Caco-2 (cell line): ENCODE measurements at regions of chr13 and their contacts with region 1.

Region 1: DNA sequence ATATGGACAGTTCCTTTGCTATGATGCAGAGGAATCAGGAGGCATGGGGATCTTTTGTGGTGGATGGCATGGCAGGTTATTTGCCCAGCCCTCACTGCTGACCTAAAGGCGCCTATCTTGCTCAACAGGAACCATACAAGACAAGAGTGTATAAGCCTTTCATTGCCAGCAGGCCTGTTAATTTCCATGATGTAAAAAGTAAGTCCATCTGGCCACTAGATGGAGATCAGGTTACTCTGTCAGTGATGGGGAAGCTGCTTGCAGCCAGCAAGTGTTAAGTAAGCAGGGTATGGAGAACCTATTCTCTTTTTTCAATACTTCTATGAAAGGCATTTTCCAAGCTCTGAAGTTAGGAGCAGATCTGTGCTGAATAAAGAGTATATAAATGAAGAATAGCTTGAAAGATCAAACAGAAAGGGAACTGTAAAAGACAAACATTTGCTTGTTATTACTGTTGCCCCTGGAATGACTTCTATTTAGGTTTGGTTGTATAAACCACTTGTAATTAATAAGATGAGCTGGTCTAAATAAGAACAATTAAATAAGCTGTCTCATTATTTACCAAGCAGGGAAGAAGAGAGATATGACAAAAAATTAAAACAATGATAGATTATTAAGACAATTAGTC is 210.9 kb downstream of the RGCC start:
- DNase-seq: peak; percentile 80 to 84
- H3K4me3 ChIP-seq: no peak overlapping the region
- H3K4me3 Mint-ChIP-seq: no peak overlapping the region
- H3K27ac Mint-ChIP-seq: peak overlapping the region; percentile 24
- H3K4me1 ChIP-seq: peaks cover 28% of the 10 kb centered on the region
- H3K4me1 Mint-ChIP-seq: peaks cover 6% of the 10 kb centered on the region
- H3K27me3 ChIP-seq: no peaks in the 10 kb centered on the region
- H3K27me3 Mint-ChIP-seq: no peaks in the 10 kb centered on the region
- CTCF ChIP-seq: peak; percentile 83 to 87

Region 2: DNA sequence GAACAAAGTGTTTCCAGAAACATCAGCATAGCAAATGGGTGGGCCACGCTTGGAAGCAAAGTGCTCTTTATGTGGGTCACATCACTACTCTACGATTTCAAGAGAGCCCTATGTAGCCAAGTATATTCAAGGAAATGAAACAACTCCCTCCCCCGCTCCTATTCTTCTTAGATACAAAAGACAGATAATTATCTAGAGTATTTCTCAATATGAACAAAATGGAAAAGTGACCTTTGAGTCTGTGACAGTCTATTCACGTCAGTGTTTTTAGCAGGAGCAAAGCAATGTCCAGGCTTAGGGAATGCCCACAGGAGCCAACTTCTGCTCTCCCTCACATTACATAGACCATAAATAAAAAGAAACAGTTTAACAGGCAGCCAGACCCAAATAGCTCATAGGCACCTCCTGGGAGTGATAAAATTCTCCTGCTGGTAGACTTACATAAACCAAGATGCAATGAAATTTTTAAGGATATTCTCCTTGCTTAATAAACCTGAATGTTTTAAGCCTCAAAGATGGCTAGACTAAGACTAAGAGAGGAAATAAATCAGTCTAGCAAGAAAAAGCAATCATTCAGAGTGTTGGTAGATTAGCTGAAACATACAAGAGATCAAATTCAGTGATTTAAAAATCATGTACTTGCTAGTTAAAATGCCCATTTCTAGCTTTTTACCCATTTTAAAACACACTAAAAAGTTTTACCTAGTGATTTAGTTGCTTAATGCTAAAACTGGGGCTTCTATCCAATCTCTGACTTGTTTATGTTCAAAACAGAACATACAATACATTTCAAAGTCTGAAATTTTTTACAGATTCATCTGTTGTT is 28.1 kb before region 1 on chr13:
- CTCF ChIA-PET with region 1: no interaction called
- POLR2A ChIA-PET with region 1: no interaction called
- intact Hi-C with region 1: no loop called
- DNase-seq: peak in 1 of 2 experiments; percentile 50
- H3K4me3 ChIP-seq: no peak overlapping the region
- H3K4me3 Mint-ChIP-seq: no peak overlapping the region
- H3K27ac Mint-ChIP-seq: peak overlapping the region; percentile 87
- H3K4me1 ChIP-seq: peaks cover 44% of the 10 kb centered on the region
- H3K4me1 Mint-ChIP-seq: peaks cover 64% of the 10 kb centered on the region
- H3K27me3 ChIP-seq: no peaks in the 10 kb centered on the region
- H3K27me3 Mint-ChIP-seq: no peaks in the 10 kb centered on the region
- CTCF ChIP-seq: no peak

Region 3: DNA sequence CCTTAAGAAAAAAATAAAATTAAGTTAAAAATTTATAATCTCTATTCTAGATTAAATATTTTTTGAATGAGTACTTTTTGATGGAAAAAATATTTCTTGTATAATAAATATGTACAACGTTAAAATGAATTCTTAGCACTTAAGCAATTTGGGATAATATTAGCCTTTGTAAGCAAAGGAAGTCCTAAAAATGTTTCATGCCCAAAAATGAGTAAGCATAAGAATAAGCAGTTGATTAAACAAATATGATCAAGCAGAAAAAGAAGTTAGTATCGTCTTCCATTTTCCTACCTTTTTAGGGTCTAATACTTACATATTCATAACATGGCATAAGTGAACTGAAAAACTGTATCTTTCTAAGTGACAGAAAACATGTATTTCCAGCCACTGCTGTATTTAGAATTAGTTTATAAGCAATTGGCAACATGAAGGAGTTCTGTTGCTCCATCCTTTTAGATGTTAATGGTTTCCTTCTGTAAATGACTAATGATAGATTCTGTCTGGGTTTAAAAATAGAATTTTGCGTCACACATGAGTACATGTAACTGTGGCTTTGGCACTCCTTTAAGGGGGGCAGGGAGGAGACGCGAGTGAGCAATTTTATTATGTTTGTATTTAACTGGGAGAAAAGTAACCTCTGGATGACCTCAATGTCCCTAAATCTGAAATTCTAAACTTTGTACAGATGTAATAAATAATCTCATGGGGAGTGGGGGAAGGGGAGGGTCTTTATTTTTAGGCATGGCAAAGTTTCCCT is 26.5 kb after region 1 on chr13:
- CTCF ChIA-PET with region 1: interaction called, 3 read pairs
- POLR2A ChIA-PET with region 1: no interaction called
- intact Hi-C with region 1: loop called (anchors 1 kb)
- DNase-seq: peak in 1 of 2 experiments; percentile 42
- H3K4me3 ChIP-seq: no peak overlapping the region
- H3K4me3 Mint-ChIP-seq: peak overlapping the region; percentile 54
- H3K27ac Mint-ChIP-seq: peak overlapping the region; percentile 94
- H3K4me1 ChIP-seq: peaks cover 57% of the 10 kb centered on the region
- H3K4me1 Mint-ChIP-seq: peaks cover 40% of the 10 kb centered on the region
- H3K27me3 ChIP-seq: no peaks in the 10 kb centered on the region
- H3K27me3 Mint-ChIP-seq: no peaks in the 10 kb centered on the region
- CTCF ChIP-seq: no peak

Region 4: DNA sequence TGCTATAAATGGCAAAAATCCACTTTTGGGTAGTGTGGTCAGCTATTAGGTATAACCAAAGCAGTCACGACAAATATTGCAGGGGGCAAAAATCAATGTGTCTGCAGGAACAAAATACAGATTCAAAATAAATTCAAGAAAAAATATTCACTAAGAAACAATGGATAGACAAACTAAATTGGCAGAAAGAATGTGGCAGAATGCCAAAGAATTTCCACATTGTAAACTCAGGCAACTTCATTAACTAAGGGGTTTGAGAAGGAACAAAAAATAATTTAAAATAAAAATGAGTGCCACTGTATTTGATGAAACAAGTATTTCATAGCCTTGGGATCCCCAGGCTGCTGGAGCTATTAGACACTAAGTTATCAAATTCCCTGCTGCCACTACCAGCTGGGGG is 99.6 kb after region 1 on chr13:
- CTCF ChIA-PET with region 1: no interaction called
- POLR2A ChIA-PET with region 1: no interaction called
- intact Hi-C with region 1: no loop called
- DNase-seq: no peak
- H3K4me3 ChIP-seq: no peak overlapping the region
- H3K4me3 Mint-ChIP-seq: no peak overlapping the region
- H3K27ac Mint-ChIP-seq: no peak overlapping the region
- H3K4me1 ChIP-seq: no peaks in the 10 kb centered on the region
- H3K4me1 Mint-ChIP-seq: no peaks in the 10 kb centered on the region
- H3K27me3 ChIP-seq: no peaks in the 10 kb centered on the region
- H3K27me3 Mint-ChIP-seq: no peaks in the 10 kb centered on the region
- CTCF ChIP-seq: no peak

Region 5: DNA sequence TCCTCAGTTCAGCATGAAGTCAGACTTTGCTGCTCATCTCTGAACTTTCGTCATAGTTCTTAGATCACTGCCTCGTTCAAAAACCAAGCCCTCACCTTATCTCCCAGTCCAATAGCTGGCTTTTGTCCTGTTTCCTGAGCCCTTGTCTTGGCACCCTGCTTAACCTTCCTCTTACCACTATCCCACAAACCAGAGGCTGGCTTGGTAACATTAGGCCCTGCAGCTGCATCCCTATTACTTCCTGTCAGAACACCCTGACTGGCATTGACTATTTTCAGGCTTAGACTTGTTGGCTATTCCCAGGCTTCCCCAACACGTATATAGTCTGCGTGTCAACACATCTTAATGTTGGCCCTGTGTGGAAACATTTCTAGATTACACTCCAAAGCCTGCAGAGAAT is 120.3 kb after region 1 on chr13:
- CTCF ChIA-PET with region 1: no interaction called
- POLR2A ChIA-PET with region 1: no interaction called
- intact Hi-C with region 1: no loop called
- DNase-seq: no peak
- H3K4me3 ChIP-seq: no peak overlapping the region
- H3K4me3 Mint-ChIP-seq: no peak overlapping the region
- H3K27ac Mint-ChIP-seq: no peak overlapping the region
- H3K4me1 ChIP-seq: no peaks in the 10 kb centered on the region
- H3K4me1 Mint-ChIP-seq: no peaks in the 10 kb centered on the region
- H3K27me3 ChIP-seq: no peaks in the 10 kb centered on the region
- H3K27me3 Mint-ChIP-seq: no peaks in the 10 kb centered on the region
- CTCF ChIP-seq: no peak

Region 6: DNA sequence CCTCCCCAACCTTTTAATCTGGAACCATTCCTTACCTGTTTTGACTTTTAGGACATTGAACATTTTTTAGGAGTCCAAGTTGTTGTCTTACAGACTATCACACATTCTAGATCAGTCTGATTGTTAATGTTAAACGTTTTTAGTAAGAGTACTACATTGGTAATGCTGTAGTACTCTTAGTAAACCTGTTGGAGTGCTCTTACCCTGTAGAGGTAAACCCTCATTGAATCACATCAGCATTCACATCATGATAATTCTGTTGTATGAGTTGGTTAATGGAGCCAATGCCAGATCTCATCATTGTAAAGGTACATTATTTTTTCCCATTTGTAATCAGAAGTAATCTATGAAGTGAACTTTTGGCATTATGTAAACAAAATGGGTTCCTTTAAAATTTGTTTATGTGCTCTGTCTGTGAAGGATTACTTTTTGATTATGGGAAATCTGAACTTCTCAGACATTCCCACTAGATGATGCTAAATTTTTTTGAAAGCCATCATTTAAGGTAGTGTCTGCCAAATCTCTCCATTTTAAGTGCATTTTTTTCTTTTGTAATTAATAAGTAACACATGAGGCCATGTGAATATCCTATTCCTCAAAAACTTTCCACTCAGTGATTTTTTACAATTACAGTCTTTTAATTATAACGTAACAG is 237.5 kb after region 1 on chr13:
- CTCF ChIA-PET with region 1: no interaction called
- POLR2A ChIA-PET with region 1: no interaction called
- intact Hi-C with region 1: loop called (anchors 5 kb)
- DNase-seq: peak in 1 of 2 experiments; percentile 31
- H3K4me3 ChIP-seq: no peak overlapping the region
- H3K4me3 Mint-ChIP-seq: no peak overlapping the region
- H3K27ac Mint-ChIP-seq: no peak overlapping the region
- H3K4me1 ChIP-seq: no peaks in the 10 kb centered on the region
- H3K4me1 Mint-ChIP-seq: no peaks in the 10 kb centered on the region
- H3K27me3 ChIP-seq: no peaks in the 10 kb centered on the region
- H3K27me3 Mint-ChIP-seq: no peaks in the 10 kb centered on the region
- CTCF ChIP-seq: peak; percentile 65 to 79

Region 7: GRCh38 chr13:42039946-42040729 is 371.9 kb after region 1 on chr13:
- CTCF ChIA-PET with region 1: interaction called, 3 read pairs
- POLR2A ChIA-PET with region 1: no interaction called
- intact Hi-C with region 1: loop called (anchors 1 kb)
- DNase-seq: peak; percentile 88 to 90
- H3K4me3 ChIP-seq: peak overlapping the region; percentile 58
- H3K4me3 Mint-ChIP-seq: peak overlapping the region; percentile 88
- H3K27ac Mint-ChIP-seq: peak overlapping the region; percentile 32
- H3K4me1 ChIP-seq: peaks cover 10% of the 10 kb centered on the region; the same call in 1 of the 2 replicates
- H3K4me1 Mint-ChIP-seq: peaks cover 17% of the 10 kb centered on the region
- H3K27me3 ChIP-seq: no peaks in the 10 kb centered on the region; the same call in 1 of the 2 replicates
- H3K27me3 Mint-ChIP-seq: peaks cover 37% of the 10 kb centered on the region
- CTCF ChIP-seq: peak in 1 of 2 experiments; percentile 9

Region 8: GRCh38 chr13:42215578-42216421 is 547.6 kb after region 1 on chr13:
- CTCF ChIA-PET with region 1: interaction called, 3 read pairs
- POLR2A ChIA-PET with region 1: no interaction called
- intact Hi-C with region 1: loop called (anchors 5 kb)
- DNase-seq: peak; percentile 45 to 55
- H3K4me3 ChIP-seq: no peak overlapping the region
- H3K4me3 Mint-ChIP-seq: no peak overlapping the region
- H3K27ac Mint-ChIP-seq: no peak overlapping the region
- H3K4me1 ChIP-seq: no peaks in the 10 kb centered on the region
- H3K4me1 Mint-ChIP-seq: peaks cover 6% of the 10 kb centered on the region
- H3K27me3 ChIP-seq: no peaks in the 10 kb centered on the region
- H3K27me3 Mint-ChIP-seq: no peaks in the 10 kb centered on the region
- CTCF ChIP-seq: peak; percentile 41 to 65